ENCODE measurements at regions of chr1 and their contacts with region 1.

Region 1: DNA sequence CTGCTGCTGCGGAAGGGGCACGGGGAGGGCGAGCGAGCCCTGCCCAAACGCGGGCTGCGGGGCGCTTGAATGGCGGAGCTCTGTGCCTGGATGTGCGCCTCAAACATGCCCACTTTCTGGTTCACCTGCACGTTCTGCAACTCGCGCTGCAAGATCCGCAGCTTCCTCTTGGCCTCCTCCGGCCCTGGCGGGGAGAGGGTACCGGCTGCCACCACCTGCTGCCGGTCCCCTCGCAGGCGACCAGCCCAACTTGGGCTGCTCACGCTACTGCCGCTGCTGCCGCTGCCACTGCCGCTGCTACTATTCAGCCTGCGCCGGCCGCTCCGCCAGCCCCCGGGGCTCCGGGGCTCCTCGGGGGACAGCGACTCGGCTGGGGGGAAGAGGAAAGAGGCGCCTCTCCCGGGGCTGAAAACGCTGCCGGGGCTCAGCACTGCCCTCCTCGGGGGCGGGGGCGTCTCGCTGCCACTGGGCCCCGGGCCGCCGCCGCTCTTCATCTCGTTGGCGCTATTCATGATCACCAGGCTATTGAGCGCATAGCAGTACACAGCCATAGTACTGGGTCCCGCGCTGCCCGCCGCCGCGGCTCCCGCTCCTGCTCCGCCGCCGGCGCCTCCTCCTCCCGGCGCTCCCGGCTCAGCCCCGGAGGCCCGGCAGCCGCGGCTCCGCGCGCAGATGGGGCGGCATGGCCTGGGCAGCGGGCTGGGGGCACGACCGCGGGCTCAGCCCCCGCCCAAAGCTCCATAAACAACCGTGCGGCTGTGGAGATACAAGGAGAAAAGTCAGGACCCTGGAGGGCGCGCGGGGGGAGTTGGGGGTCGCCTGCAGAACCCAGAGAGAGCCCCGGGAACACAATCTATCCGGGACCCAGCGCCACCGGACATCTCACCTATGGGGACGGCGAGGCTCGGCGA is 1.9 kb downstream of the ITPKB start:
- DNase-seq: peak; percentile 47
- ATAC-seq: peak; percentile 57 to 60

Region 2: DNA sequence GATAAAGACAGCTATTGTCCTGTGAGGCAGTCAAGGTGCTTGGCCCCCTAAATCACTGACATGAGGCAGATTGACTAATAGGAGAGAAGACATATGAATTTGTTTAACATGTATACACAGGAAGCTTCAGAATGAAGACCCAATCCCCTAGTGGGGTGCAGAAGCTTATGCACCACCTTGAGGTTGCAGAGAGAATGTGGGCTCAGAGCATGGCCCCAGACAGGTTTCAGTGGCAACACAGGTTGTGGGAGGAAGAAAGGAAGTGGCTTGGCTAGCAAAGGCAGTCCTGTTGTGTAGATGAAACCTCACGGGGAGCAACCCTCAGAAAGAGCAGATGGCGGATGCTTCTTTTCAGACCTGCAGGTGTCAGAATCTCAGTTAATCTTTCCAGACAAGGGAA is 292.3 kb before region 1 on chr1:
- intact Hi-C with region 1: no loop called
- DNase-seq: no peak
- ATAC-seq: peak; percentile 31 to 41

Region 3: GRCh38 chr1:226634166-226634588 is 103.0 kb before region 1 on chr1:
- intact Hi-C with region 1: loop called in 1 of 2 experiments (anchors 5 kb)
- DNase-seq: peak; percentile 88
- ATAC-seq: peak; percentile 82 to 86

Region 4: GRCh38 chr1:226649780-226650179 is 87.4 kb before region 1 on chr1:
- intact Hi-C with region 1: loop called in 1 of 2 experiments (anchors 10 kb)
- DNase-seq: no peak
- ATAC-seq: no peak

Region 5: GRCh38 chr1:226662642-226663326 is 74.4 kb before region 1 on chr1:
- intact Hi-C with region 1: loop called (anchors 5 to 10 kb)
- DNase-seq: peak; percentile 77
- ATAC-seq: peak; percentile 62 to 85

Region 6: DNA sequence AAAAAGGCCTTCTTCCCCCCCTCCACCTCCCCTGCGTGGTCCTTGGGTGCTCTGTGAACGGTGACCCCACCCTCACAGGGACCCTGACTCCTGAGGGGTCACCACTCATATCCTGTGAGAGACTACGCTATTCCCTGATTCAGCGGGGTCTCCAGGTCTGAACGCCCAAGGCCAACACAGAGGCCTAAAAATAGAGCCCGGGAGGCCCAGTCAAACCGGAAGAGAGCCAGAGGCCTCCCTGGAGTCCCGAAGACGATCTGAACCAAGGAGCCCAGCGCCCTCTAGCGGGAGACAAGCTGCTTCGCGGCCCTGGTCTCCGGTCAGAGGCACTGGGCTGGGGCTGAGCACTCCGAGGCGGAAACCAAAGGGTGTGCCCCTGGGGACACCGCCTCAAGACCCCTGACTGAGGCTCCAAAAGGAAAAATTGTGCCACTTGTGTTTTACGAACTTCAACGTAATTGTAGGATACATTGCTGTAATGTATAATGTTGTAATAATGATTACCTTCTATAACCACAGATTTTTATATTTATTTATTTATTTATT is 90.9 kb after region 1 on chr1:
- intact Hi-C with region 1: loop called (anchors 5 to 10 kb)
- DNase-seq: peak; percentile 97
- ATAC-seq: peak; percentile 98 to 99

Measured in left cardiac atrium (tissue), 4 donors.